K562 (cell line): ENCODE measurements at regions of chr21 and their contacts with region 1.

Region 1: DNA sequence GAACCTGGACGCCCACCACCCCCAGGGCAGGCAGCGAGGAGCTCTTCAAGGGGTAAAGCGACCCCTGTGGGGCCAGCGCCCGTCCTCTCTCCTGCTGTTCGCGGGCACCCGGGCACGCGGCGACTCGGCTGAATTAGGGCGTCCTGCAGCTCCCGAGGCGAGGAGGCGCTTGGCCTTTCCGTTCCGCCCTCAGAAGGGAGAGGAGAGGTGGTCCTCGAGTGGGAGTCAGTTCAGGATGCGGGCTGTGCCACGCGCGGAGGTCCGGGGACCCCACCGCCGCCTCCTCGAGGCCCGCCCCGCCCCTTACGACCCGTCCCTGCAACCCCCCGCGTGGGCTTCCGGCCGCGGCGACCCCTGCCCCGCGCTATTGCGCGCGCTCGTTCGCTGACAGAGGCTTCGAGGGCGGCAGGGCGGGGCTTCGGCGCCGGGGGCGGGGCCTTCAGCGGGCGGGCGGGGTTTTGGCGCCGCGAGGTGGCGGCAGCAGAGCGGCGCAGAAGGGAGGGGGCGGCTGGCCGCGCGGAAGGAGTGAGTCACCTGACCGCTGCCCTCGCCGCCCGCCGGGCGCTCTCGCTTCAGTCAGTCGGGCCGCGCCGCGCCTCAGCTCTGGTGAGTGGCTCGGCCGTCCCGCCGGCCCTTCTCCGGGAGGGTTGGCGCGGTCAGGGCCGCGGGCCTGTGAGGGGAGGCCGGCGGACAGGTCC is at the start of gene BACH1:
- DNase-seq: peak; percentile 95 to 97 (median 96)
- ATAC-seq: peak; percentile 86
- H3K4me3 ChIP-seq: peak within 1 kb of the TSS; percentile 74
- H3K27ac ChIP-seq: peak within 1 kb of the TSS; percentile 98
- H3K4me1 ChIP-seq: peaks cover 10 to 29% of the 10 kb centered on the region in 2 experiments
- H3K27me3 ChIP-seq: no peaks in the 10 kb centered on the region
- CTCF ChIP-seq: peak in 2 of 3 experiments; percentile 55 to 77; a peak in 4 of 6 replicates
- EP300 ChIP-seq: no peak
- POLR2A ChIP-seq: peak; percentile 80
- RAD21 ChIP-seq: peak; percentile 48 to 77
- polyA plus RNA-seq, gene BACH1: 10.6 to 12.6 TPM

Region 2: GRCh38 chr21:29024474-29025327 is 273.8 kb before region 1 on chr21 and contains the start of gene USP16:
- CTCF ChIA-PET with region 1: no interaction called
- POLR2A ChIA-PET with region 1: interaction called, 11 read pairs
- in situ Hi-C with region 1: no loop called
- intact Hi-C with region 1: no loop called
- DNase-seq: peak; percentile 100
- ATAC-seq: peak; percentile 97
- H3K4me3 ChIP-seq: peak within 1 kb of the TSS; percentile 65
- H3K27ac ChIP-seq: peak within 1 kb of the TSS; percentile 97
- H3K4me1 ChIP-seq: peaks cover 3 to 13% of the 10 kb centered on the region in 2 experiments; a peak in 1 of 5 replicates
- H3K27me3 ChIP-seq: no peaks in the 10 kb centered on the region
- CTCF ChIP-seq: peak in 2 of 3 experiments; percentile 26 to 29; a peak in 2 of 6 replicates
- EP300 ChIP-seq: no peak; the same call in 1 of the 2 replicates
- POLR2A ChIP-seq: peak; percentile 95
- RAD21 ChIP-seq: 0 out of 4 replicates have a peak, but pooled peaks of 1 of the 2 experiments have one; percentile 5
- polyA plus RNA-seq, gene USP16: 62.8 to 67.4 TPM

Region 3: DNA sequence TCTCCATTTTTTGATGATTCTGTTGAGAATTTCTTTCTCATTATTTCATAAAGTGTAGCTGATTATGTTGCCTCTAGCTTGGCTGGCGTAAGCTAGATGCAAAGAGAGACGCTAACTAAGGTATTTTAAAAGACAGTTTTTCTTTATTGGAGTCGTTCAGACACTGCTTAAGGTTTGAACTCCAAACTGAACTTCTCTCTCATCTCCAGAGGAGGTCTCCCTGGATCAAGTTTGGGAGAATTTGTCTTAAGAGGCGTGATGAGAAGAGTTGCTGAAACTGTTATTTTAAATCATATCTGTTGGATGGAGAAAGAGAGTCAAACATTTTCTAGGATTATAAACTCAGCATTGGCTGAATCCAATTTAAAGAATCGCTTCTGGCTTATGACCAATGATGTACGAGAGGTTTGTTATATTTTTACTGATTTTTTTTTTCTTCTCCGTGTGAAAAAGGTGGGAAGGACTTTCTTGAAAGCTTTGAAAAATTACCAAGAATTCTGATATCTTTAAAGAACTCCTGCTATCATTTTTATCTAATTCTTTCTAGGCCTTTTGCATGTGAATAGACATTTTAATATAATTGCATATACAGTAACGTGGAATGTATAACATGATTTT is 134.1 kb before region 1 on chr21:
- CTCF ChIA-PET with region 1: interaction called, 3 read pairs
- POLR2A ChIA-PET with region 1: interaction called, 4 read pairs
- in situ Hi-C with region 1: no loop called
- intact Hi-C with region 1: loop called (anchors 5 kb)
- DNase-seq: peak in 2 of 4 experiments; percentile 50 to 72
- ATAC-seq: peak; percentile 87
- H3K4me3 ChIP-seq: no peak overlapping the region
- H3K27ac ChIP-seq: no peak overlapping the region
- H3K4me1 ChIP-seq: no peaks in the 10 kb centered on the region
- H3K27me3 ChIP-seq: peaks cover 0 to 8% of the 10 kb centered on the region in 2 experiments; a peak in 3 of 5 replicates
- CTCF ChIP-seq: peak; percentile 63 to 86 (median 67)
- EP300 ChIP-seq: 0 out of 2 replicates have a peak, but pooled peaks have one; percentile 12
- POLR2A ChIP-seq: no peak
- RAD21 ChIP-seq: peak; percentile 94 to 96

Region 4: DNA sequence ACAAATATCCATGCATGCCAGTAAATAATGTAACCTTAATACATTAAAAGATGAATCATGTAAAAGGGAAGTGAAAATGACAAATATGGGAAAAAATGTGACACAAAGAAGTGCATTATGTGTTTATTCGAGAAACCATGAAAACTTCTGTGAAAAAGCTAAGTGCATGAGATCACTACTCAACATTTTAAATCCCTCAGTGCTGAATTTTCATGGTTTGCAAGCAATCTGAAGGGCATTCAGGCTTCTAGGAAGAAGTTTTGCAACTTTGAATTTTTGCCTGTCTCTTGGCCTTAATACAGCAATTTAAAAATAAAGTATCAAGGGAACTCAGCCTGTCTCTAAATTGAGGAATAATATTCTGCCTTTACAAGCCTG is 89.8 kb before region 1 on chr21:
- CTCF ChIA-PET with region 1: no interaction called
- POLR2A ChIA-PET with region 1: no interaction called
- in situ Hi-C with region 1: no loop called
- intact Hi-C with region 1: no loop called
- DNase-seq: no peak
- ATAC-seq: no peak
- H3K4me3 ChIP-seq: no peak overlapping the region
- H3K27ac ChIP-seq: no peak overlapping the region
- H3K4me1 ChIP-seq: no peaks in the 10 kb centered on the region
- H3K27me3 ChIP-seq: peaks cover 4 to 10% of the 10 kb centered on the region in 2 experiments; a peak in 2 of 5 replicates
- CTCF ChIP-seq: no peak
- EP300 ChIP-seq: no peak
- POLR2A ChIP-seq: no peak
- RAD21 ChIP-seq: no peak

Region 5: DNA sequence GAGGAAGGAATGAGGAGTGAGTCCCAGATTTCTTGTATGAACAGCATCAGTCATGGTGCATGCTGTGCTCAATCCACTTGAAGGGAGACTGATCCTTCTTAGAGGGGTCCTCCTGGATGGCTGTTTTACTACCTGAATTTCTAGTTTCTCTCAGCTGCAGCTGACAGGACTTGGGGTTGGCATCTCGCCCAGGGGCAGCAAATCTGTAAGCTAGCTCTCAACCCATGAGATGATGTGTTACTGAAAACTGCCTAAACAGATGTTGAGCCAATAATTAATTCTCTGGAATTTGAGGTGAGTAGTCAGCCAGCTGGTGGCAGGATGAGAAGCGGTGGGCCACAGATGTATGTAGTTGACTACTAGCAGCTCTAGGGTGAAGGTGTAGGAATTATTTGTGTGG is 19.9 kb after region 1 on chr21:
- CTCF ChIA-PET with region 1: no interaction called
- POLR2A ChIA-PET with region 1: interaction called, 220 read pairs
- in situ Hi-C with region 1: no loop called
- intact Hi-C with region 1: no loop called
- DNase-seq: no peak
- ATAC-seq: no peak
- H3K4me3 ChIP-seq: no peak overlapping the region
- H3K27ac ChIP-seq: no peak overlapping the region
- H3K4me1 ChIP-seq: peaks cover 8 to 53% of the 10 kb centered on the region in 2 experiments; a peak in 4 of 5 replicates
- H3K27me3 ChIP-seq: no peaks in the 10 kb centered on the region
- CTCF ChIP-seq: no peak
- EP300 ChIP-seq: no peak
- POLR2A ChIP-seq: no peak
- RAD21 ChIP-seq: no peak

Region 6: DNA sequence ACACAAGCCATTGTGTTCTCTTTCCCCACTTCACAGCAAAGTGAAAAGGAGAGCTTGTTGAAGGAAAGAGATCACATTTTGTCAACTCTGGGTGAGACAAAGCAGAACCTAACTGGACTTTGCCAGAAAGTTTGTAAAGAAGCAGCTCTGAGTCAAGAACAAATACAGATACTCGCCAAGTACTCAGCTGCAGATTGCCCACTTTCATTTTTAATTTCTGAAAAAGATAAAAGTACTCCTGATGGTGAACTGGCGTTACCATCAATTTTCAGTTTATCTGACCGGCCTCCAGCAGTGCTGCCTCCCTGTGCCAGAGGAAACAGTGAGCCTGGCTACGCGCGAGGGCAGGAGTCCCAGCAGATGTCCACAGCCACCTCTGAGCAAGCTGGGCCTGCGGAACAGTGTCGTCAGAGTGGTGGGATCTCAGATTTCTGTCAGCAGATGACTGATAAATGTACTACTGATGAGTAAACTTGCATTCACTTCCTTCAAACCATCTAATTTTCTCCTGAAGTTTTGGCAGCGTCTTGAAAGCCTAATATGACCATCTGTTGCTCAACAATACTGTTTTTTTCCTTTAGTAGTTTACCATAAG is 44.0 kb after region 1 on chr21:
- CTCF ChIA-PET with region 1: no interaction called
- POLR2A ChIA-PET with region 1: interaction called, 4 read pairs
- in situ Hi-C with region 1: no loop called
- intact Hi-C with region 1: loop called (anchors 5 kb)
- DNase-seq: no peak
- ATAC-seq: no peak
- H3K4me3 ChIP-seq: no peak overlapping the region
- H3K27ac ChIP-seq: no peak overlapping the region
- H3K4me1 ChIP-seq: peaks cover 2 to 7% of the 10 kb centered on the region in 2 experiments; a peak in 2 of 5 replicates
- H3K27me3 ChIP-seq: no peaks in the 10 kb centered on the region
- CTCF ChIP-seq: no peak
- EP300 ChIP-seq: no peak
- POLR2A ChIP-seq: no peak
- RAD21 ChIP-seq: no peak

Region 7: DNA sequence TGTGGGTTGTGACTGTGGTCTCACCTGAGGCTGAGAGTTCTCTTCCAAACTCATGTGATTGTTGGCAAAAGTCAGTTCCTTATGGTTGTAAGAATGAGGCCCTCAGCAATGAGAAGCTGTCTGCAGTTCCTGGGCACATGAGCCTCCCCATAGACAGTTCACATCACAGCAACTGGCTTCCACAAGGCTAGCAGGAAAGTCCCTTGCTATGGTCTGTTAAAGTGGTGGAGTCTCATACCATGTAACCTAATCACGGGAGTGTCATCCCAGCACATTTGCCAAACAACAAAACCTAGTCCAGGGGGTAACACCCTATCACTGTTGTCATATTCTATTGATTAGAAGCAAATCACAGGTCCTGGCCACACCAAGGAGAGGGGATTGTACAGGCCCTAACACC is 164.0 kb after region 1 on chr21:
- CTCF ChIA-PET with region 1: no interaction called
- POLR2A ChIA-PET with region 1: no interaction called
- in situ Hi-C with region 1: no loop called
- intact Hi-C with region 1: no loop called
- DNase-seq: no peak
- ATAC-seq: no peak; the same call in 2 of the 3 replicates
- H3K4me3 ChIP-seq: no peak overlapping the region
- H3K27ac ChIP-seq: no peak overlapping the region
- H3K4me1 ChIP-seq: no peaks in the 10 kb centered on the region
- H3K27me3 ChIP-seq: no peaks in the 10 kb centered on the region
- CTCF ChIP-seq: no peak
- EP300 ChIP-seq: no peak
- POLR2A ChIP-seq: no peak
- RAD21 ChIP-seq: no peak

Region 8: GRCh38 chr21:29656504-29657239 is 358.2 kb after region 1 on chr21:
- CTCF ChIA-PET with region 1: no interaction called
- POLR2A ChIA-PET with region 1: no interaction called
- in situ Hi-C with region 1: no loop called
- intact Hi-C with region 1: loop called (anchors 10 kb)
- DNase-seq: peak; percentile 62 to 95 (median 75)
- ATAC-seq: peak; percentile 89
- H3K4me3 ChIP-seq: no peak overlapping the region
- H3K27ac ChIP-seq: peak overlapping the region; percentile 98
- H3K4me1 ChIP-seq: peaks cover 8 to 68% of the 10 kb centered on the region in 2 experiments
- H3K27me3 ChIP-seq: no peaks in the 10 kb centered on the region
- CTCF ChIP-seq: 0 out of 6 replicates have a peak, but pooled peaks of 1 of the 3 experiments have one; percentile 1
- EP300 ChIP-seq: peak; percentile 99
- POLR2A ChIP-seq: peak; percentile 75
- RAD21 ChIP-seq: peak; percentile 31 to 51

Region 9: GRCh38 chr21:29904359-29905282 is 606.1 kb after region 1 on chr21:
- CTCF ChIA-PET with region 1: no interaction called
- POLR2A ChIA-PET with region 1: no interaction called
- in situ Hi-C with region 1: no loop called
- intact Hi-C with region 1: no loop called
- DNase-seq: peak in 1 of 4 experiments; percentile 52
- ATAC-seq: peak; percentile 95
- H3K4me3 ChIP-seq: no peak overlapping the region
- H3K27ac ChIP-seq: peak overlapping the region; percentile 13; the same call in 1 of the 3 replicates
- H3K4me1 ChIP-seq: no peaks in the 10 kb centered on the region; a peak in 1 of 5 replicates
- H3K27me3 ChIP-seq: no peaks in the 10 kb centered on the region
- CTCF ChIP-seq: peak in 1 of 3 experiments; percentile 32; a peak in 2 of 6 replicates
- EP300 ChIP-seq: no peak
- POLR2A ChIP-seq: no peak
- RAD21 ChIP-seq: peak in 1 of 2 experiments; percentile 43; a peak in 3 of 4 replicates